ENCODE measurements at regions of chr1 and their contacts with region 1.

Region 1: DNA sequence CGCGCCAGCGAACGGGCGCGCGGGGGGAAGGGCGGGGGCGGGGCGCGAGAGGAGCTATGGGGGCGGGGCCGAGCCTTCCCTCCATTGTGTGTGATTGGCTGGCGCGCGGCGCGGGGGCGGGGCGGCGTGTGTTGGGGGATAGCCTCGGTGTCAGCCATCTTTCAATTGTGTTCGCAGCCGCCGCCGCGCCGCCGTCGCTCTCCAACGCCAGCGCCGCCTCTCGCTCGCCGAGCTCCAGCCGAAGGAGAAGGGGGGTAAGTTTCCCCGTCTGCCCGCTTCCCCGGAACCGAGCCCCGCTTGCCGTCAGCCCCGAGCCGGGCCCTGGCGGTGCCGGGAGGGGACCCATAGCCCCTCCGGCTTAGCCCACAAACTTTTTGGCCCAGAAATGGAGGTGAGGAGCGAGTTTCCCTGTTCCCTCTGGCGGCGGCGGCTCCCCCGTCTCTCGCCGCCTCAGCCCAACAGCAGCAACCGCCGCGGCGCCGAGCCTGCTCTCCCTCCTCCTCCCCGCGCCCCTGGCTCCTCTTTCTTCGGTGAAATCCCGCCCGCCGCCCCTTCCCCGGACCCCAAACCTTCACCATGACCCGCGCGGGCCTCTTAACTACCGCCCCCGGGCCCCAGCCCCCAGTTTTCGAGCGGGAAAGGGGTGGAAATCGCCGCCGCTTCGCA is at the start of gene H3-3A:
- DNase-seq: peak; percentile 96
- ATAC-seq: peak; percentile 79
- H3K4me3 Mint-ChIP-seq: peak within 1 kb of the TSS; percentile 100
- H3K27ac Mint-ChIP-seq: peak within 1 kb of the TSS; percentile 99
- H3K4me1 Mint-ChIP-seq: peaks cover 44% of the 10 kb centered on the region
- H3K27me3 Mint-ChIP-seq: no peaks in the 10 kb centered on the region
- CTCF ChIP-seq: no peak
- total RNA-seq, gene H3-3A: 600 and 642 TPM in 2 replicates

Region 2: DNA sequence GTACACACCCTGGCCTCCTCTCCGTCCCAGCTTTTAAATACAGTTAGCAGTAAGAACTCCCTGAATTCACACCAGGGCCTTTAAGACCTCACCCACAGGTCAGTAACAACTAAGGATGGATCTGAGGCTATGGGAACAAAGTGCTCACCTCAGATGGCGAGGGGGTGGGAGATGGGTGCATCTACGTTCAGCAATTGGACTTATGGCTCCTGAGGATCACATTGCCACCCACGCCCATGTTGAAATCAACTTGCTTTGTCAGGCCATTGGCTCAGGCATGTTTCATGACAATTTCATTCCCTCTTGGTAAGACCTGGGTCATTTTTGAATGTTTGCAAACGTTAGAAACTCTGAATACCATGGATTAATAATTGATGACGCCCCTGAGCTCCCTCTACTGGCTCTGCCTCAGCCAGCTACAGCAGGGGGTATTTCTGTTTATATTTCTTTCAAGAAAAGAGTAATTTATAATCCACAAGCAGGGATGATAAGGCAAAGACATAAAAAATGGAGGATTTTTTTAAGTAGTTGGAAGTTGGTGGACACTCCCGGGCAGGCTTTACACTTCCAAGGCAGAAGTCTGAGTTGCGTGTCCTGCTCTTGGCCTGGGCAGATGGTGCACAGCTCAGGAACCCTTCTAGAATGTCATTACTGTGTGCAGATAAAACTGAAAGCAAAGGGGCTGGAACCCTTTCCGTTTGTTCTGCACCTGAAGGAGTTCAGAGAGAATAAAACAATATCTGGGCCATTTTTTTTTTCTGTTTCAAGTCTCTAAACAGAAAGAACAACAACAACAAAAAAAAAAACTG is 621.2 kb before region 1 on chr1:
- CTCF ChIA-PET with region 1: interaction called, 3 read pairs
- POLR2A ChIA-PET with region 1: interaction called, 13 read pairs
- intact Hi-C with region 1: no loop called
- DNase-seq: no peak
- ATAC-seq: no peak
- H3K4me3 Mint-ChIP-seq: peak overlapping the region; percentile 25
- H3K27ac Mint-ChIP-seq: peak overlapping the region; percentile 78
- H3K4me1 Mint-ChIP-seq: peaks cover 69% of the 10 kb centered on the region
- H3K27me3 Mint-ChIP-seq: no peaks in the 10 kb centered on the region
- CTCF ChIP-seq: no peak

Region 3: GRCh38 chr1:225923692-225924555 is 138.8 kb before region 1 on chr1 and contains the start of gene PYCR2:
- CTCF ChIA-PET with region 1: no interaction called
- POLR2A ChIA-PET with region 1: interaction called, 15 read pairs
- intact Hi-C with region 1: no loop called
- DNase-seq: peak; percentile 93
- ATAC-seq: peak; percentile 98
- H3K4me3 Mint-ChIP-seq: peak within 1 kb of the TSS; percentile 95
- H3K27ac Mint-ChIP-seq: peak within 1 kb of the TSS; percentile 88
- H3K4me1 Mint-ChIP-seq: peaks cover 20% of the 10 kb centered on the region
- H3K27me3 Mint-ChIP-seq: no peaks in the 10 kb centered on the region
- CTCF ChIP-seq: no peak
- total RNA-seq, gene PYCR2: 109 and 110 TPM in 2 replicates

Region 4: GRCh38 chr1:226029093-226029496 is 33.6 kb before region 1 on chr1:
- CTCF ChIA-PET with region 1: interaction called, 10 read pairs
- POLR2A ChIA-PET with region 1: interaction called, 102 read pairs
- intact Hi-C with region 1: loop called (anchors 1 kb)
- DNase-seq: peak; percentile 39
- ATAC-seq: peak; percentile 86
- H3K4me3 Mint-ChIP-seq: peak overlapping the region; percentile 68
- H3K27ac Mint-ChIP-seq: peak overlapping the region; percentile 94
- H3K4me1 Mint-ChIP-seq: peaks cover 45% of the 10 kb centered on the region
- H3K27me3 Mint-ChIP-seq: no peaks in the 10 kb centered on the region
- CTCF ChIP-seq: no peak

Region 5: GRCh38 chr1:226100436-226101391 is 38.0 kb after region 1 on chr1:
- CTCF ChIA-PET with region 1: interaction called, 12 read pairs
- POLR2A ChIA-PET with region 1: interaction called, 6 read pairs
- intact Hi-C with region 1: no loop called
- DNase-seq: no peak
- ATAC-seq: peak; percentile 67
- H3K4me3 Mint-ChIP-seq: peak overlapping the region; percentile 87
- H3K27ac Mint-ChIP-seq: no peak overlapping the region
- H3K4me1 Mint-ChIP-seq: peaks cover 13% of the 10 kb centered on the region
- H3K27me3 Mint-ChIP-seq: no peaks in the 10 kb centered on the region
- CTCF ChIP-seq: no peak

Region 6: GRCh38 chr1:226186124-226187018 is 123.7 kb after region 1 on chr1 and contains the start of gene ACBD3:
- CTCF ChIA-PET with region 1: interaction called, 4 read pairs
- POLR2A ChIA-PET with region 1: interaction called, 9 read pairs
- intact Hi-C with region 1: loop called (anchors 1 kb)
- DNase-seq: peak; percentile 79
- ATAC-seq: peak; percentile 93
- H3K4me3 Mint-ChIP-seq: peak within 1 kb of the TSS; percentile 94
- H3K27ac Mint-ChIP-seq: peak within 1 kb of the TSS; percentile 94
- H3K4me1 Mint-ChIP-seq: peaks cover 45% of the 10 kb centered on the region
- H3K27me3 Mint-ChIP-seq: no peaks in the 10 kb centered on the region
- CTCF ChIP-seq: no peak
- total RNA-seq, gene ACBD3: 38.6 and 41.4 TPM in 2 replicates